Activated CD8-positive, alpha-beta T cell treated with anti-CD3 and anti-CD28 coated beads for 36 hours (primary cell): ENCODE measurements at regions of chr11 and their contacts with region 1.

Region 1: DNA sequence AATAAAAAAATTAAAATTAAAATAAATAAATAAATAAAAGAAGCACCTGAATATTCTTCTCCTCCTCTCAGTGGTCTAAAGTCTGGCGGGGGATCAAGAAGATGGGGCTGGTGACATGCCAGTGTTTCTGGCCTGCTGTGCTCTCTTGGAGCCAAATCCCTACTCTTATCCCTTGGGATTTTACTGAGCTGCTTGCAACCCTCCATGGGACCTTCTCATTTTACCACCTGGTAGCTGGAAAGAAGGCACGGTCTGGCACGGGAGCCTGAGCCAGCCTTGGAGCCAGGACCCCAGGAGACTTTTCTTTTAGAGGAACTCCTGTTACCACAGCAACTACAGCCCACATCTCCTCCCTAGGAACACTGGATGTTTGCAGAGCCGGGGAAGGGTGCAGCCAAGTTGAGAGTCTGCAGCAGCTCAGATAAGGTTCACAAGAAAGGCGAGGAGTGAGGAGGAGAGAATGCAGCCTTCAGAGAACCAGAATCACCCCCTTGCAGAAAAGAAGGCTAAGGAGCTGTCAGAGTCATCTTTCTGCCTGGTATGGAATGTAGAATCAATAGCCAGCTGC is 21.4 kb downstream of the CD6 start:
- DNase-seq: no peak
- ATAC-seq: no peak
- H3K4me3 Mint-ChIP-seq: peak overlapping the region; percentile 34
- H3K27ac Mint-ChIP-seq: peak overlapping the region; percentile 92
- H3K4me1 Mint-ChIP-seq: peaks cover 75% of the 10 kb centered on the region
- H3K27me3 Mint-ChIP-seq: no peaks in the 10 kb centered on the region
- CTCF ChIP-seq: no peak

Region 2: DNA sequence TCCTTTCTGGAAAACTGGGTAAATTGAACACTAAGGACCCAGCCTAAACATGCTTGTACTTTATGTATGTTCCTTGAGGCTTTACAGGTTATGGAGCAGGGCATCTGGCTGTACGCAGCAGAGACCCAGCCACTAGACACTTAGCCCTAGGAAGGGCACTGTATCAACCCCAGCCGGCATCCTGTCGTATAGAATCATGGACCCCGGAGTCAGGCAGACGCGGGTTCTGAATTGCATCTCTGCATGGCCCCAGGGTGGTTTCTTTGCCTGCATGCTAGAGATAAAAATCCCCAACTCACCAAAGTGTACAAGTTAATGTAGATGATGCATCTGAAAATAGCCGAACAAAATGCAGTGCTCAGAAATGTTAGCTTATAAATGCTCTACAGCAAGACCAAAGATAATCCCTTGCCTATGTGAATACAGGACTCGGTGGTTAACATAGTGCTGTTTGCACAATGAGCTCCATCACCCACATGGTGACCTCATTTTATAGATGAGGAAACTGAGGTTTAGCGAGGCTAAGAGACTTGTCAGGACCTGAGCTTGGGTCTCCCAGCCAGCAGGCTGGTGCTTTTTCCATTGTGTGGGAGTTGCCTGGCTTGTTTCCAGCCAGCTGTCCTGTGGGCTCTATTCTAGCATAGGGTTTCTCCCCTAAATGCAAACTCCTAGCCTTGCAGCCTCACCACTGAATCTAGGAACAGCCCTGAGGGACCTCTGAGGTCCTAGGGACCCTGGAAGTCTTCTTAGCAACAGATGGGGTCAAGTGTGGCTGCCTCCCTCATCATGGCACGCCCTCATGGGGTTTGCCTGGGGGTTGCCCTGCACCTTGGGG is 14.2 kb before region 1 on chr11:
- CTCF ChIA-PET with region 1: interaction called, 14 read pairs
- POLR2A ChIA-PET with region 1: interaction called, 11 read pairs
- intact Hi-C with region 1: loop called (anchors 2 kb)
- DNase-seq: peak; percentile 92
- ATAC-seq: peak; percentile 76
- H3K4me3 Mint-ChIP-seq: peak overlapping the region; percentile 65
- H3K27ac Mint-ChIP-seq: peak overlapping the region; percentile 98
- H3K4me1 Mint-ChIP-seq: peaks cover 72% of the 10 kb centered on the region
- H3K27me3 Mint-ChIP-seq: no peaks in the 10 kb centered on the region
- CTCF ChIP-seq: no peak